ENCODE measurements at regions of chr2 and their contacts with region 1.

Region 1: GRCh38 chr2:237000481-237000880 is 85.2 kb upstream of the COPS8 start:
- DNase-seq: no peak
- H3K4me3 ChIP-seq: no peak overlapping the region
- H3K27me3 ChIP-seq: no peaks in the 10 kb centered on the region; the same call in 1 of the 2 replicates
- CTCF ChIP-seq: no peak

Region 2: GRCh38 chr2:236744281-236744705 is 256.2 kb before region 1 on chr2:
- CTCF ChIA-PET with region 1: no interaction called
- POLR2A ChIA-PET with region 1: interaction called, 12 read pairs
- DNase-seq: peak; percentile 98
- H3K4me3 ChIP-seq: no peak overlapping the region
- H3K27me3 ChIP-seq: peaks cover 16% of the 10 kb centered on the region
- CTCF ChIP-seq: no peak